ENCODE measurements at regions of chr6 and their contacts with region 1.

Region 1: DNA sequence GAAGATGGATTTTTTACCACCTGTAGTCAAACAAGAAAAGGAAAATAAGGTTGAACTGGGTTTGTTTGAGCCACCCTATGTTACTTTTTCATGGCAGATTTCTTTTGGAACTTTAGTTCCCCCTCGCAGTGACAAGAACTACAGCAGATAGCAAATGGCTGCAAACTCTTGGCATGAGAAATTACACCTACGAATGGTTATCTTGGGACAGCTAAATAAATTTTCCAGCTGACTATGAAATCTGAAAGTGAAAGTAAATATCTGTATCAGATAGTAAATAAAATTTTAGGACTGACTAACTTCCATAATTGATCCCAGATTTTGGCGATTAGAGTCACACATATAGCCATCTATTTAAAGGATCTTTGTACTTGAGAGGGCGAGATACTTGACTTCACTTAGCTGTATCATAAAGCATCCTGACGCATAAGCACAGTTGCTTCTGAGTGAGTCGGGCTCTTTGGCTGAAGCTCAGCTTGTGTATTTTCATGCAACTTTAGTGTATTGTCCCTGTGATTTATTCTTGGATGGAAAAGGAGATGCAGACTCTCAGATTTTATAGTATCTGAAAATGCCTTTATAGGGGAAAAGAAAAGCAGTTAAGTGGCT is 125.3 kb upstream of the B3GAT2 start:
- DNase-seq: no peak
- CTCF ChIP-seq: no peak

Region 2: DNA sequence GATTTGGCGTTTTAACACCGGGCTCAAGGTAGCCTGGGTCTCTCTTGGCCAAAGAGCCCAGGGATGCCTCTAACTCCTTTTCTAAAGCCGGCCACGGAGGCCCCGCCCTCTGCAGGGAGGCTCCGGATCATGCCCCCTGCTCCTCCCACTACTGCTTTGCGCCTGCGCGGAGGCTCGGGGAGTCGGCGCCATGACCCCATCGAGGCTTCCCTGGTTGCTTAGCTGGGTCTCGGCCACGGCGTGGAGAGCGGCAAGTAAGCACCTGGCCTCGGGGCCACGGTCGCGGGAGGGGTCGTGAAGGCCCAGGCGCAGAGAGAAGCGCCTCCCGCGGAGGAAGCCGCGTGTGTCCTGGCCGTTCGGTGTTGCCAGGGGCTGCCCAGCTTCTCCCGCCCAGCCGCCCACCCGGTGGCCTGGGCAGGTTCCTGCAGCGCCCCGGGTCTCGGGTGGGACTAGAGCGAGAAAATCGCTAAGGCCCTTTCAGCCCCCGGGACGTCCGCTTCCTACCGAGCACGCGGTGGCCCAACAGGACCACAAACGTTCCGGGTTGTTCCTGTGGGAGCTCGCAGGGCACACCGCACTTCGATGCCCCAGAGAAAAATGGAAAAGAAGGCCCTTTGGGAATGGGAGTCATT is 515.3 kb before region 1 on chr6 and contains the start of gene SDHAF4:
- in situ Hi-C with region 1: no loop called
- DNase-seq: peak; percentile 95
- CTCF ChIP-seq: no peak

Region 3: DNA sequence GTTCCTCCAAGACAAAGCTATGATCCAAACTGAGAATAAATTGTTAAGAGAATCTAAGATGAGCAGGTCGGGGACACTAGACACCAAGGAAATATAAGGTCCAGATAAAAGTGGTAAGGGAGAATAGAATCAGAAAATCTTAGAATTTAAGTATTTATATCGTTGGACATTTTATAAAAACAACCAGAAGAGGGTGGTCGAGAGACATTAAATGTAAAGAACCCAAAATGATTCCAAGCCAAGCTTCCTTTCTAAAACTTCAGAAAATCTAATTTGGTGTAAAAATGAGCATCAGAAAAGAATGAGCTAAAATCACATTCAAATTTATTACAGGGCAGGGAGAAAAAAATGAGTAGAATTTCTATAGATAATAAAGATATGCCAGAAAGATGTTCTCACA is 108.7 kb after region 1 on chr6:
- in situ Hi-C with region 1: loop called (anchors 25 kb)
- DNase-seq: no peak
- CTCF ChIP-seq: no peak

Measured in GM13977 (cell line).